ENCODE measurements at regions of chr10 and their contacts with region 1.

Region 1: DNA sequence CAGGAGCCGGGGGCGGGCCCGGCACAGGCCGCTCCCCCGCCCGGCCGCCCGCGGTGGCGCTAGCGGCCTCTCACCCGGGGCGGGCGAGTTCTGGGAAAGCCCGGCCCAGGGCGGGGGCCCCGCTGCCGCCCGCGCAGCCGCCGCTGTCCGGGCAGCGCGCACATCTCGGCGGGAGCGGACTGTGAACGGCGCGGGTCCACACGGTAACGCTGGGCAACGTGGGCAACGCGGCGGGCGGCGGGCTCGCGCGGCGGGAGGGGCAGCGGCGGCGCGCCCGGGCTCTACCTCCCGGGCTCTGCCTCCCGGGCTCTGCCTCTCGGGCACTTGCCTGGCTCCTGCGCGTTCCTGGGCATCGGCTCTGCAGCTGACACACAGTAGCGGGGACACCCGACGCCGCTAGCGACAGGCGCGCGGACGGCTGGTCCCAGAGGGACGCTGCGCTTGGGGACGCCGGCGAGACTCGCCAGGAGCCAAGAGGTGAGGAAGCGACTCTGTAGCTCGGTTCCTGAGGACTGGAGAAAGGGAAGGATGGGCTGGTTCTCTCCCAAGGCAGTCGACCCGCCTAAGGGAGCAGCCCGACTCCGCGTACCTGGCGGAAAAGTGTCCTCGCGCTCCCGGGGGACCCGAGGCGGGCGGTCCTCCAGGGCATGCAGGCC is at the start of gene PLCE1:
- DNase-seq: peak; percentile 49 to 71 (median 66)
- ATAC-seq: peak; percentile 7 to 92 (median 84)
- H3K4me3 ChIP-seq: peak within 1 kb of the TSS; percentile 45 to 84 (median 61)
- H3K27ac ChIP-seq: peak within 1 kb of the TSS in 11 of 12 donors; percentile 22 to 81 (median 66)
- H3K4me1 ChIP-seq: peaks cover 0 to 53% (median 18%) of the 10 kb centered on the region in 12 donors
- H3K27me3 ChIP-seq: peaks cover 0 to 42% (median 0%) of the 10 kb centered on the region in 9 donors
- CTCF ChIP-seq: no peak
- POLR2A ChIP-seq: no peak
- total RNA-seq, gene PLCE1: 8.0 to 42.1 (median 11.1) TPM

Region 2: DNA sequence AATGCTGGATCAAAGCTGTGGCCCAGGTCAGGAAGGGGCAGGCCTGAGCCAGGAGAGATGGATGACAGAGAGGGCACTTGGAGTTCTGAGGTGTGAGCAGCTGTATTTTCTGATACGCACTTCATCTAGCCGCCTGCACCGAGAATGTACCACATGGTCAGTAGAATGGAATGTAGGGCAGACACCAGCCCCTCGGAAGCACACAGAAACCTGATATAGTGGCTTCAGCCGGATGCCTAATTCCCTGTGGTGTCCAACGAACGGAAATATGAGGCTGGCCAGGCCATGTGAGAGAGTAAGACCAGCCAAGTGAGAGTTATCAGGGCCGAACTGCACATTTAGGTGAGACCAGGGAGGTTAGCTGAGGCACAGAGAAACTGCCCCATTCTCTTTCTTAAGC is 46.9 kb before region 1 on chr10:
- intact Hi-C with region 1: loop called in 1 of 10 experiments (anchors 10 kb)
- DNase-seq: peak in 4 of 5 donors; percentile 46 to 78 (median 72)
- ATAC-seq: peak; percentile 91 to 97 (median 92)
- H3K4me3 ChIP-seq: no peak overlapping the region
- H3K27ac ChIP-seq: peak overlapping the region in 11 of 12 donors; percentile 10 to 94 (median 59)
- H3K4me1 ChIP-seq: peaks cover 0 to 41% (median 11%) of the 10 kb centered on the region in 12 donors
- H3K27me3 ChIP-seq: no peaks in the 10 kb centered on the region
- CTCF ChIP-seq: no peak
- POLR2A ChIP-seq: no peak

Region 3: DNA sequence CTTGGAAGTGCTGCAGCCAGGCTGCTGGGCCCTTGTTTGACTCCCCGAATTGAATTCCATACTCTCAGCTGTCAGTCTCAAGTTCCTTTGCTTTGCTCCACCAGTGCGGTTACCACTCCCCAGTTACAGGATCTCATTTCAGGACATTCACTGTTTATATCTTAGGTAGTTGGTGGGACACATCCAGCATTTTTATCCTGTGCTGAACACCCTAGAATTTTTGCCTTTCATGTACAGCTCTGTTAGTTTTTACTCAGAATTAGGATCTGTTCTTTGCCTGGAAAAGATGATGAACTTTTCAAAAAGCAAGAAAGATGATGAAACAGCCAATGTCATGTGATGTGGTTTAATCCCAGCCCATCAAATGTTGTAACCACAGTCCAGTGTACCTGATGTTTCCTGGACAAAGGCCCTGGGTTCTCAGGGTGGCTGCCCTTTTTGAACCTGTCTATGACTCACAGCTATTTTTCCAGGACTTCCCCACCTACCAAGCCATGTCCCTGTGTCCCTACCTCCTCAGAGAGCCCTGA is 219.2 kb after region 1 on chr10:
- intact Hi-C with region 1: loop called in 1 of 10 experiments (anchors 10 kb)
- DNase-seq: no peak
- ATAC-seq: peak in 1 of 4 donors; percentile 23
- H3K4me3 ChIP-seq: no peak overlapping the region
- H3K27ac ChIP-seq: peak overlapping the region in 2 of 12 donors; percentile 16 to 24
- H3K4me1 ChIP-seq: peaks cover 0 to 45% (median 25%) of the 10 kb centered on the region in 12 donors
- H3K27me3 ChIP-seq: no peaks in the 10 kb centered on the region
- CTCF ChIP-seq: no peak
- POLR2A ChIP-seq: no peak

Region 4: DNA sequence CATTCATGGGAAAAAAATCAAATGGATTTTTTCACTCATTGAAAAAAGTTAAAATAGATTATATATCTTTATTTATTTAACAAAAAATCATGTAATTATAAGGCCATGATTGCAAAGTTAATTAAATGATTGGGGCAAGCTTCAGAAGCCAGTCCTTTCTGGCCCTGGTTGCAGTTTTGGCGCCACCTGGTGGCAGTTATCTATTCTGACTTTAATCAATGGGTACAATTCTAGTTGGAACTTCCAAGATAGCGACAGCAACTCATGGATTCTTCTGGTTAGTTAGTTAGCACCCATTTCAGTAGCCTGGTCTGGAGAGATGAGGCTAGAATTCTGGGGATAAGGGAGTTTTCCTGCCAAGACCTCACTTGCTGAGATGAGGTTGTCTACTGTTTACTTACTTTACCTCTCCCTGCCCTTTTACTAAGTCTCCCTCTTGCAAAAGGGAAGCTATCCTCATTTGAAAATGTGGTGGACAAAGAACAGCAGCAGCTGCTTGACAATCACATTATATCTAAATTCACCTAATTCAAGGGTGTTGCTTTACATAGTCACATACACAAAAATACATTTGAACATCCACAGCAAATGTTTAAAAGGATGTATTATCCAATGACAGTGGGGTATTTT is 326.5 kb after region 1 on chr10:
- intact Hi-C with region 1: loop called in 1 of 10 experiments (anchors 5 kb)
- DNase-seq: peak; percentile 57 to 73 (median 69)
- ATAC-seq: peak in 3 of 4 donors; percentile 43 to 63 (median 51)
- H3K4me3 ChIP-seq: no peak overlapping the region
- H3K27ac ChIP-seq: no peak overlapping the region
- H3K4me1 ChIP-seq: peaks cover 0 to 13% (median 0%) of the 10 kb centered on the region in 12 donors
- H3K27me3 ChIP-seq: no peaks in the 10 kb centered on the region
- CTCF ChIP-seq: peak; percentile 81 to 94 (median 88)
- POLR2A ChIP-seq: no peak